ENCODE measurements at regions of chr6 and their contacts with region 1.

Region 1: GRCh38 chr6:31103136-31103535 is 9.2 kb downstream of the C6orf15 start:
- DNase-seq: no peak
- H3K4me3 ChIP-seq: no peak overlapping the region
- H3K27me3 ChIP-seq: no peaks in the 10 kb centered on the region; the same call in 1 of the 2 replicates
- CTCF ChIP-seq: no peak

Region 2: GRCh38 chr6:30876039-30876730 is 227.0 kb before region 1 on chr6:
- CTCF ChIA-PET with region 1: no interaction called
- POLR2A ChIA-PET with region 1: no interaction called
- DNase-seq: no peak
- H3K4me3 ChIP-seq: no peak overlapping the region
- H3K27me3 ChIP-seq: no peaks in the 10 kb centered on the region
- CTCF ChIP-seq: no peak

Region 3: GRCh38 chr6:31087494-31088089 is 15.5 kb before region 1 on chr6:
- CTCF ChIA-PET with region 1: interaction called, 17 read pairs
- POLR2A ChIA-PET with region 1: no interaction called
- DNase-seq: no peak
- H3K4me3 ChIP-seq: no peak overlapping the region
- H3K27me3 ChIP-seq: no peaks in the 10 kb centered on the region; the same call in 1 of the 2 replicates
- CTCF ChIP-seq: peak; percentile 69

Region 4: DNA sequence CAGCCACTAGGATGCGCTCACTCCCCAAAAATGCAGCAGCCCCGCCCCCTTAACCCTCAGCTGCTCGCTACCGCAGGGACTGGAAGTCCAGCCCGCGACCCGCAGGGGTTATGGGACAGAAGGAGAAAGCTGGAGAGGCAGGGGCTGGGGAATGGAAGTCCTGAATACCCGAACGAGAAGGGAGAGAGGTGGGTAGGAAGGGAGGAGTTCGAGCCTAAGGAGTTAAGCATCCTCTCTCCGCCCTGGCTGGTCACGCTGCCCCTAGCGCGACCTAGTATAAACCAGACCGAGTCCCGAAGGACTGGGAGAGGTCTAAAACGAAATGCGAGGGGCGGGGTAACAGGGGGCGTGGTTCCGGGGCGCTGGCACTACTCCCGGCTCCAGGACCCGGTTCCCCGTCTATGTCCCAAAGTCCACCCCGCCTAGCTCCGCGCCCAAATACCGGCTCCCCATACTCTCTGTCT is 626.4 kb after region 1 on chr6:
- CTCF ChIA-PET with region 1: no interaction called
- POLR2A ChIA-PET with region 1: no interaction called
- DNase-seq: peak; percentile 58
- H3K4me3 ChIP-seq: peak overlapping the region; percentile 88
- H3K27me3 ChIP-seq: no peaks in the 10 kb centered on the region
- CTCF ChIP-seq: no peak